AG04450 (cell line): ENCODE measurements at regions of chr6 and their contacts with region 1.

Region 1: GRCh38 chr6:41602864-41603608 is 35.2 kb upstream of the MDFI start:
- DNase-seq: peak; percentile 57
- H3K4me3 ChIP-seq: peak overlapping the region; percentile 27
- H3K27ac ChIP-seq: peak overlapping the region; percentile 21
- H3K27me3 ChIP-seq: no peaks in the 10 kb centered on the region
- CTCF ChIP-seq: peak; percentile 94

Region 2: GRCh38 chr6:41451515-41452163 is 151.4 kb before region 1 on chr6:
- CTCF ChIA-PET with region 1: interaction called, 10 read pairs
- POLR2A ChIA-PET with region 1: no interaction called
- DNase-seq: no peak
- H3K4me3 ChIP-seq: no peak overlapping the region
- H3K27ac ChIP-seq: peak overlapping the region; percentile 21
- H3K27me3 ChIP-seq: peaks cover 17% of the 10 kb centered on the region
- CTCF ChIP-seq: no peak

Region 3: GRCh38 chr6:41591859-41592502 is 11.1 kb before region 1 on chr6:
- CTCF ChIA-PET with region 1: interaction called, 17 read pairs
- POLR2A ChIA-PET with region 1: no interaction called
- DNase-seq: peak; percentile 27
- H3K4me3 ChIP-seq: no peak overlapping the region
- H3K27ac ChIP-seq: no peak overlapping the region
- H3K27me3 ChIP-seq: no peaks in the 10 kb centered on the region
- CTCF ChIP-seq: peak; percentile 93

Region 4: DNA sequence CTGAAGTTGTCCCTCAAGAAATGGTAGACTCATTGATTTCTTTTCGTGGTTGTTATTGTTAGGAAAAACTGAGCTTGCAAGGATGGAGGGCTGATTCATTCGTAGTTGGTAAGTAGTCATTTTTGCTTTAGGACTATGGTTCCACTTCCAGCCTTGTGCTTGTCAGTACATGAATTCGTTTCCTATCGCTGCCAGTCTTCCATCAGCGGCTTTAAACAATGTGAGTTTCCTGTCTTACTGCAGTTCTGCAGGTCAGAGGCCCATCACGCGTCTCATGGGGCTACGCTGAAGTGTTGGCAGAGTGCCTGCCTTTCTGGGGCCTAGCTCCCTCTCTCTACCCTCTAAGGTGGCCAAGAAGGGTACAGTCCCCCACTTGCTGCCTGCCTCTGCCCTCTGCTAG is 23.9 kb after region 1 on chr6:
- CTCF ChIA-PET with region 1: interaction called, 12 read pairs
- POLR2A ChIA-PET with region 1: no interaction called
- DNase-seq: no peak
- H3K4me3 ChIP-seq: no peak overlapping the region
- H3K27ac ChIP-seq: no peak overlapping the region
- H3K27me3 ChIP-seq: peaks cover 24% of the 10 kb centered on the region
- CTCF ChIP-seq: no peak

Region 5: DNA sequence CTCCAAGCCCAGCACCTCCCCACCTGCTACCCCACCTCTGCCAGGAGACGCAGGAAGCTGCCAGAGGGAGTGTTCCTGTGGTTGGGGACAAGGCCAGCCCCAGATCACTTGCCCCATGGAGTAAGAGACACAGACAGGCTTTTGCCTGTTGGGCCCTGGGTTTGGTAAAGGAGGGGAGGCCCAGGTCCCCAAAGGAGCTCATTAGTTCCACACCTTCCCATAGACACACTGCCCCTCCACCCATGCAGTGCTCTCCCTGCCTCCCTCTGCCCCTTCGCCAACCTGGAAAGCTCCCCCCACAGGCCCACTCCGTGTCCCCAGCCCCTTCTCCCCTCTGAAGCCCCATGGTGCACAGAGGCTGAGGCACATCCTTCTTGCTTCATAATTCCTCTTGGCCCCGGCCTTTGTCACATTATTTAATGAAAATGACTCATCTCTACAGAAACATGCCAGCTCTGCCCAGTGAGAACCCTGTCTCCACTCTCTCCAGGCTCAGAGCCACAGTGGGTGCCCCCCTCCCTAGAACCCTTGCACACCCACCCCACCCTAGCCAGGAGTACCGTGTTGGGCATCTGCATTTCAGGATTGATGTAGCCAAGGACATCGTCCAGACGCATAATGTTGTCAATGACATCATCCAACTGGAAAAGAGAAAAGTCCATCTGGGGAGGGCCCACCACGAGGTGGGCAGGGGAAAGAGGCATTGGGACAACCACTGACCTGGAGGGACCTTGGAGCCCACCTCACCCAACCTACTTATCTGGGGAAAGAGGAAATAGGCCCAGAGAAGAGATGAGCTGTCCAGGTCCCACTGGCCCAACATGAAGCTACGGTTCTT is 86.4 kb after region 1 on chr6:
- CTCF ChIA-PET with region 1: interaction called, 135 read pairs
- POLR2A ChIA-PET with region 1: no interaction called
- DNase-seq: no peak
- H3K4me3 ChIP-seq: no peak overlapping the region
- H3K27ac ChIP-seq: no peak overlapping the region
- H3K27me3 ChIP-seq: no peaks in the 10 kb centered on the region
- CTCF ChIP-seq: no peak